Caco-2 (cell line): ENCODE measurements at regions of chr2 and their contacts with region 1.

Region 1: DNA sequence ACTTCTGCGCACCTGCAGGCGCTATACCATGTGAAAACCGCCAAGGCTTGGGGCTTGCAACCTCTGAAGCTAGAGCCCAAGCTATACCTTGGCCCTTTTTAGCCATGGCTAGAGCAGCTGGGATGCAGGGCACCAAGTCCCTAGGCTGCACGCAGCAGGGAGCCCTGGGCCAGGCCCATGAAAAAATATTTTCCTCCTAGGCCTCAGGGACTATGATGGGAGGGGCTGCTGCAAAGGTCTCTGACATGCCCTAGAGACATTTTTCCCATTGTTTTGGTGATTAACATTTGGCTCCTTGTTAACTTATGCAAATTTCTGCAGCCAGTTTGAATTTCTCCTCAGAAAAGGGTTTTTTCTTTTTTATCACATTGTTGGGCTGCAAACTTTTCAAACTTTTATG is 56.9 kb upstream of the LHCGR start:
- DNase-seq: no peak
- H3K4me3 ChIP-seq: no peak overlapping the region
- H3K4me3 Mint-ChIP-seq: no peak overlapping the region
- H3K27ac Mint-ChIP-seq: no peak overlapping the region
- H3K4me1 ChIP-seq: no peaks in the 10 kb centered on the region
- H3K4me1 Mint-ChIP-seq: peaks cover 5% of the 10 kb centered on the region
- H3K27me3 ChIP-seq: no peaks in the 10 kb centered on the region
- H3K27me3 Mint-ChIP-seq: peaks cover 3% of the 10 kb centered on the region
- CTCF ChIP-seq: no peak

Region 2: GRCh38 chr2:48792029-48792428 is 20.3 kb before region 1 on chr2:
- CTCF ChIA-PET with region 1: no interaction called
- POLR2A ChIA-PET with region 1: interaction called, 14 read pairs
- intact Hi-C with region 1: no loop called
- DNase-seq: no peak
- H3K4me3 ChIP-seq: no peak overlapping the region
- H3K4me3 Mint-ChIP-seq: no peak overlapping the region
- H3K27ac Mint-ChIP-seq: no peak overlapping the region
- H3K4me1 ChIP-seq: no peaks in the 10 kb centered on the region
- H3K4me1 Mint-ChIP-seq: no peaks in the 10 kb centered on the region
- H3K27me3 ChIP-seq: no peaks in the 10 kb centered on the region
- H3K27me3 Mint-ChIP-seq: peaks cover 3% of the 10 kb centered on the region
- CTCF ChIP-seq: no peak